ENCODE measurements at regions of chr10 and their contacts with region 1.

Region 1: DNA sequence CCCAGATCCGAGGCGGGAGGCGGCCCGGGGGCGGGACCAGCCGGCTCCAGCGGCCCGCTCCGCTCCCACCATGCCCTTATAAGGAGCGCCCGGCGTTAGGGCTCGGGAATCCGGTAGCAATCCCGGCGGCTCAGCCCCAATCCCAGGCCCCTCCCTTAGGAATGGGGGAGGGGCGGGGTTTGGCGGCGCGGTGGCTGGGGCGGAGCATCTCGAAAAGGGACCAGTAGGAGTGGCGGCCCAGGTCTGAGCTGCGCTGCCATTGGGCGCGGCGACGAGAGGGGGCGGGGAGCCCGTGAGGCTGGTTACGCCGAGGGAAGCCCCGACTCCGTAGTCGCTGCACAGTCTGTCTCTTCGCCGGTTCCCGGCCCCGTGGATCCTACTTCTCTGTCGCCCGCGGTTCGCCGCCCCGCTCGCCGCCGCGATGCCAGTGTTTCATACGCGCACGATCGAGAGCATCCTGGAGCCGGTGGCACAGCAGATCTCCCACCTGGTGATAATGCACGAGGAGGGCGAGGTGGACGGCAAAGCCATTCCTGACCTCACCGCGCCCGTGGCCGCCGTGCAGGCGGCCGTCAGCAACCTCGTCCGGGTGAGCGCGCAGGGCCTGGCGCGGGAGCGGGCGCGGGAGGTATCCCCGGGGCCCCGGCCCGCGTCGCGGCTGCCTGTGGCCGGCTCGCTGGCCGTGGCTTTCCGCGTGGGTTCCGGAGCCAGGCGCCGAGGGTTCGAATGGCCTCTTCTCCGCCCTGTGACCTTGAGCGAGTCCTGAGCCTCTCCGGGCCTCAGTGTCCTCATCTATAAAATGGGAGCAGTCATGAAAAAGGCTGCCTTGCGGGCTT is at the start of gene VCL:
- DNase-seq: peak; percentile 98
- H3K4me3 Mint-ChIP-seq: peak within 1 kb of the TSS; percentile 88
- H3K27ac Mint-ChIP-seq: peak within 1 kb of the TSS; percentile 95
- H3K4me1 Mint-ChIP-seq: peaks cover 25% of the 10 kb centered on the region
- H3K27me3 Mint-ChIP-seq: no peaks in the 10 kb centered on the region
- CTCF ChIP-seq: no peak
- total RNA-seq, gene VCL: 90.2 and 90.9 TPM in 2 replicates

Region 2: GRCh38 chr10:73785721-73786511 is 212.1 kb before region 1 on chr10:
- CTCF ChIA-PET with region 1: no interaction called
- POLR2A ChIA-PET with region 1: no interaction called
- intact Hi-C with region 1: no loop called
- DNase-seq: peak; percentile 20
- H3K4me3 Mint-ChIP-seq: peak overlapping the region; percentile 78
- H3K27ac Mint-ChIP-seq: peak overlapping the region; percentile 84
- H3K4me1 Mint-ChIP-seq: peaks cover 21% of the 10 kb centered on the region
- H3K27me3 Mint-ChIP-seq: no peaks in the 10 kb centered on the region
- CTCF ChIP-seq: no peak

Region 3: GRCh38 chr10:73956476-73957359 is 41.3 kb before region 1 on chr10:
- CTCF ChIA-PET with region 1: interaction called, 3 read pairs
- POLR2A ChIA-PET with region 1: interaction called, 3 read pairs
- intact Hi-C with region 1: loop called (anchors 1 kb)
- DNase-seq: no peak
- H3K4me3 Mint-ChIP-seq: no peak overlapping the region
- H3K27ac Mint-ChIP-seq: no peak overlapping the region
- H3K4me1 Mint-ChIP-seq: peaks cover 4% of the 10 kb centered on the region
- H3K27me3 Mint-ChIP-seq: no peaks in the 10 kb centered on the region
- CTCF ChIP-seq: no peak

Region 4: DNA sequence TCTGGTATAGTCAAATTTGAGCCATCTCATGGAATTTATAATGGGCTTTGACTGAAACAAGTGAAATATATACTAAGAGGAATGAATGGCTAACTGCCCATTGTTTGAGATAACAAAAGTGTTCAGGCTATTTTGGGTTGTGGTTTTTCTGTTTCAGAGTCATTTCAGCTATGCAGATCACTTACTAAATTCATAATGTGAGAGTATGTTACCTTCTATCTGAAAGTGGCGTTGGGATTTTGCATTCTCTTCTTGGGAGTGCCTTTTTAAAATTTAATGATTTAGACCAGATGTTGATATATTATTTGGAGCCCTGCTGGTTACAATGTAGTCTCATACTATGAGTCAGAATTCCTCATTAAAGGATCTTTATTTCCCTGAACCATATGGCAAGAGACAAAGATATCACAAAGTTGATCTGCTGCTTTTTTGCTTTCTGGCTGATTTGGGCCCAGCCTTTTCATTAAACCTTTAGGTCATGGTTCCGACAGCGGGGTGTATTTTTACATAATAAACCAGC is 10.3 kb after region 1 on chr10:
- CTCF ChIA-PET with region 1: interaction called, 6 read pairs
- POLR2A ChIA-PET with region 1: interaction called, 103 read pairs
- intact Hi-C with region 1: no loop called
- DNase-seq: no peak
- H3K4me3 Mint-ChIP-seq: no peak overlapping the region
- H3K27ac Mint-ChIP-seq: peak overlapping the region; percentile 31
- H3K4me1 Mint-ChIP-seq: peaks cover 26% of the 10 kb centered on the region
- H3K27me3 Mint-ChIP-seq: no peaks in the 10 kb centered on the region
- CTCF ChIP-seq: no peak

Region 5: GRCh38 chr10:74026428-74027015 is 28.5 kb after region 1 on chr10:
- CTCF ChIA-PET with region 1: interaction called, 9 read pairs
- POLR2A ChIA-PET with region 1: interaction called, 64 read pairs
- intact Hi-C with region 1: no loop called
- DNase-seq: no peak
- H3K4me3 Mint-ChIP-seq: no peak overlapping the region
- H3K27ac Mint-ChIP-seq: no peak overlapping the region
- H3K4me1 Mint-ChIP-seq: peaks cover 21% of the 10 kb centered on the region
- H3K27me3 Mint-ChIP-seq: no peaks in the 10 kb centered on the region
- CTCF ChIP-seq: no peak

Region 6: DNA sequence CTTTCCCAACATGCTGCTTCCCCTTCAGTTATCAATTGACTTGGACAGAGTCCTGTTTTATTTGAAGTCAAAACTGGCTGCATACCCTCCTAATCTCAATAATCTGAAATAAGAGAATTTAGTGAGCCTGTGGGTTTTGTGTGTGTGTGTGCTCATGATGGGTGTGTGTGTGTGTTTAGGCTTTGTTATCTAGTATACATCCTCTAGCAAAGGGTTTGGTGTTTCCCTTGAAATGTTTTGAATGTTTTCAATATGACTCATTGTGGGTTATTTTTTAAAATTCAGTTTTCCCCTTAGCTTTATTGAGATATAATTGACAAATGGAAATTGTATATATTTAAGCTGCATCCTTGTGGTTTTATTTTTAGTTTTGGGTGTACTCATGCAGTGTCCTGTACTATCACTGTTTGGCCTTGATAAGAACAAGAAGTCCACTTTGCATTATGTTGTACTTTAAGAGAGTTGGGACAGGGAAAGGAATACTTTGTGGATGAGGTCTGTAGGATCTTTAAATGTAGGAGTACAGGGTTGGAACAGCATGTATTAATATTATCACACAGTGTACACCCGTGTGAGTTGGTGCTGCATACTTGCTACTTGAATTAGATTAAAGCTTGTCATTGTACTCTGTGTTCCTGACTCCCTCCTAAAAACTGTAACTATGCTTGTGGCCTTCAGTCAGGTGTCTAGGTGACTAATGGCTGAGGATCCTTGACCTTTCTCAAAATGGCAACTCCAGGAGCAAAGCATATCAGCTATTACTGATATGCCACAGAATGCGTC is 58.2 kb after region 1 on chr10:
- CTCF ChIA-PET with region 1: interaction called, 5 read pairs
- POLR2A ChIA-PET with region 1: interaction called, 18 read pairs
- intact Hi-C with region 1: no loop called
- DNase-seq: peak; percentile 47
- H3K4me3 Mint-ChIP-seq: no peak overlapping the region
- H3K27ac Mint-ChIP-seq: peak overlapping the region; percentile 81
- H3K4me1 Mint-ChIP-seq: peaks cover 26% of the 10 kb centered on the region
- H3K27me3 Mint-ChIP-seq: no peaks in the 10 kb centered on the region
- CTCF ChIP-seq: no peak

Region 7: DNA sequence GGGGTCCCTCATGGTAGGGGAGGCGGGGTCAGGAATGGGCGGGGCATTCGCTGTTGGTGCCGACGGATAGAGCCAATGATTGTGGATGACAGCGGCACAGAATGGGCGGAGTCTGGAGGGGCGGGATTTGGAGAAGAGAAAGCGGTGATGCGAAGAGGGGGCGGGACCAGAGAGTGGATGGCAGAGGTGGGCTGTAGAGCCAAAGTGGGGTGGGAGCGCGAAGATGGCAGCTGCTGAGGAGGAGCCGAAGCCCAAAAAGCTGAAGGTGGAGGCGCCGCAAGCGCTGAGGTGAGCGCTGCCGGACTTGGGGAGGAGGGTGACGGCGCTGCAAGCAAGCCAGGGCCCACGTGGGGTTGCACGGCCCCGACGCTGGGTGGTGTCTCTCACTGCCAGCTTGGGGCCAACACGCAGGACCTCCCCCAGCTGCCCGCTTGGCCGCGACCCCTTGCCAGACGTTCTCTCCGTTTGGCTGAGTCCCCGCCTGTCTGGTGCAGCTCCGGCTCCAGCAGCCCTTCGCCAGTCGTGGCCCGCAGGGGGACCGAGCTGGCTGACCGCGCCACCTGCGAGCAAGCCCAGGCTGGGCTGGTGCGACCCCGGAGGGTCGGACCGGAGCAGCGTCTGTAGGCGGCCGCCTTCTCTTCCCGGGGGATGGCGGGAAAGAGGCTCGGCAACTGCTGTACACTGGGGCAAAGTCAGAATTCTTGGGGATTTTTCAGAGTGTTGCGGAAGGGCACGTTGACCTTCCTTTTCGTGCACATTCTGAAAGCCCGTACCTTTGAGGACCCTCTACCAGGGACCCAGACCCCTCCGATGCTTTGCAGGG is 153.3 kb after region 1 on chr10 and contains the start of gene ADK:
- CTCF ChIA-PET with region 1: no interaction called
- POLR2A ChIA-PET with region 1: interaction called, 18 read pairs
- intact Hi-C with region 1: no loop called
- DNase-seq: peak; percentile 98
- H3K4me3 Mint-ChIP-seq: no peak within 1 kb of the TSS
- H3K27ac Mint-ChIP-seq: no peak within 1 kb of the TSS
- H3K4me1 Mint-ChIP-seq: peaks cover 28% of the 10 kb centered on the region
- H3K27me3 Mint-ChIP-seq: no peaks in the 10 kb centered on the region
- CTCF ChIP-seq: peak; percentile 25
- total RNA-seq, gene ADK: 96.6 and 98.6 TPM in 2 replicates

Region 8: DNA sequence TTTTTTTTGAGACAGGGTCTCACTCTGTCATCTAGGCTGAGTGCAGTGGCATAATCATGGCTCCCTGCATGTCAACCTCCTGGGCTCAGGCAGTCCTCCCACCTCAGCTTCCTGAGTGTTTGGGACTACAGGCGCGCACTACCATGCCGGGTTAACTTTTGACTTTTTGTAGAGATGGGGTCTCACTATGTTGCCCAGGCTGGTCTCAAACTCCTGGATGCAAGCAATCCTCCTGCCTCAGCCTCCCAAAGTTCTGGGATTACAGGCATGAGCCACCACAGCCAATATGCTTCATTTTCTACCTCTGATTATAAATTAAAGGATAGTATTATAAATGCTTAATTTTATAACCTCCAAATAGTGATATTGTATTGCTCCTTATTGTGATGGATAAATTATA is 274.3 kb after region 1 on chr10:
- CTCF ChIA-PET with region 1: no interaction called
- POLR2A ChIA-PET with region 1: no interaction called
- intact Hi-C with region 1: no loop called
- DNase-seq: no peak
- H3K4me3 Mint-ChIP-seq: no peak overlapping the region
- H3K27ac Mint-ChIP-seq: peak overlapping the region; percentile 59
- H3K4me1 Mint-ChIP-seq: peaks cover 7% of the 10 kb centered on the region
- H3K27me3 Mint-ChIP-seq: no peaks in the 10 kb centered on the region
- CTCF ChIP-seq: no peak

Measured in MCF 10A (cell line).